ENCODE measurements at regions of chr20 and their contacts with region 1.

Region 1: DNA sequence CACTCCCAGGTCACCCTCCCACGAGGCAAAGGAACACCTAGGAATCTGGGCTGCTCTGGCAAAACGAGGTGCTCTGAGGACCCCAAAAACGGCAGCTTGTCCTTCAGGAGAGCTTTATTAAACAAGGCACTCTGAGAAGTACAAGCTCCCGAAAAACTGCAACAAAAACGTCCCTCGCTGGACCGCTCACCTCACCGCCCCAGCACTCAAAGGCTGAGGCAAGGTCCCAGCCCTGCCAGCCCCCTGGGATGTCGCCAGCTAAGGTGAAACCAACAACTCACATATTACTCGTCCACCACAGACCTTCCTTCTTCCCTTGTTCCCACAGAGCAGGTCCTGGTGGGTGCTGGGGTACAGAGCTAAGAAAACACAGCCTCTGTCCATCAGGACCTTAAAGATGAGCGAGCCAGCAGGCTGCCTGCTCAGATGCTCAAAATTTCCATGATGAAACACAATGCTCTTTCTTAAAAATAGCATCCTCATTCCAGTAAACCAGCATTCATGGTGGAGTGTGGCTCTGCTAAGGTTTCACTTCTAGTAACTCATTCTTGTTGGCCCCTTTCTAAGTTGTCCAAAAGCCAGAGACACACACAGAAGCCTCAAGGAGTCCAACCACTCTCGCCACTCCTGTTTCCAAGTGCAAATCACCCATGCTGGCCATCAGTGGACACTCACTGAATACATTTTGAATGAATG is 35.9 kb downstream of the ATP9A start:
- DNase-seq: no peak
- H3K4me3 Mint-ChIP-seq: peak overlapping the region; percentile 85
- H3K27ac Mint-ChIP-seq: peak overlapping the region; percentile 91
- H3K4me1 Mint-ChIP-seq: peaks cover 8% of the 10 kb centered on the region
- H3K27me3 Mint-ChIP-seq: no peaks in the 10 kb centered on the region

Region 2: DNA sequence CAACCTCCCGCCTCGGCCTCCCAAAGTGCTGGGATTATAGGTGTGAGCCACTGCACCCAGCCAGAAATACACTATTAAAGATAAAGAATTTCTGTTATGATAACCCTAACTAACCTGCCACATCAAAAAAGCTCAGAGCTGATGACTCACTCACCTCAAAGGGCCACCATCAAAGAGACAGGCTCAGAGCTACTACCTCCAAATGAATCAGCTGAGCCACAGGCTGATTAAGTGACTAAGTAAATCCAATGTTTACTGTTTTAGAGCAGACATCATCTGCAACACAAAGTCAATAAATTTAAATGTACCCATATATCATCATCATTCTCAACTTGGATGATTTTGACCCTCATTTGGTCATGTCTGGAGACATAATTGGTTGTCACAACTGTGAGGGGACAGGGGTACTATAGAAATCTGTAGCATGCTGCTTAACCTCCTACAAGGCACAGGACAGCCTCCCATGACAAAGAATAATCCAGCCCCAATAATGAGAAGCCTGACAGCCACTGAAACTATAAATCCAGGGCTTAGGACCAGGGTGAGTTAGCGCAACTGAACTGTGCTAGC is 70.5 kb before region 1 on chr20:
- intact Hi-C with region 1: loop called (anchors 5 kb)
- DNase-seq: peak; percentile 20
- H3K4me3 Mint-ChIP-seq: peak overlapping the region; percentile 5
- H3K27ac Mint-ChIP-seq: peak overlapping the region; percentile 58
- H3K4me1 Mint-ChIP-seq: peaks cover 24% of the 10 kb centered on the region
- H3K27me3 Mint-ChIP-seq: no peaks in the 10 kb centered on the region

Region 3: GRCh38 chr20:51720856-51721255 is 11.4 kb before region 1 on chr20:
- intact Hi-C with region 1: loop called (anchors 1 kb)
- DNase-seq: no peak
- H3K4me3 Mint-ChIP-seq: no peak overlapping the region
- H3K27ac Mint-ChIP-seq: peak overlapping the region; percentile 66
- H3K4me1 Mint-ChIP-seq: peaks cover 30% of the 10 kb centered on the region
- H3K27me3 Mint-ChIP-seq: no peaks in the 10 kb centered on the region

Region 4: GRCh38 chr20:51767010-51767558 is 34.8 kb after region 1 on chr20:
- intact Hi-C with region 1: loop called (anchors 5 kb)
- DNase-seq: peak; percentile 60
- H3K4me3 Mint-ChIP-seq: peak overlapping the region; percentile 69
- H3K27ac Mint-ChIP-seq: no peak overlapping the region
- H3K4me1 Mint-ChIP-seq: peaks cover 9% of the 10 kb centered on the region
- H3K27me3 Mint-ChIP-seq: peaks cover 27% of the 10 kb centered on the region

Region 5: DNA sequence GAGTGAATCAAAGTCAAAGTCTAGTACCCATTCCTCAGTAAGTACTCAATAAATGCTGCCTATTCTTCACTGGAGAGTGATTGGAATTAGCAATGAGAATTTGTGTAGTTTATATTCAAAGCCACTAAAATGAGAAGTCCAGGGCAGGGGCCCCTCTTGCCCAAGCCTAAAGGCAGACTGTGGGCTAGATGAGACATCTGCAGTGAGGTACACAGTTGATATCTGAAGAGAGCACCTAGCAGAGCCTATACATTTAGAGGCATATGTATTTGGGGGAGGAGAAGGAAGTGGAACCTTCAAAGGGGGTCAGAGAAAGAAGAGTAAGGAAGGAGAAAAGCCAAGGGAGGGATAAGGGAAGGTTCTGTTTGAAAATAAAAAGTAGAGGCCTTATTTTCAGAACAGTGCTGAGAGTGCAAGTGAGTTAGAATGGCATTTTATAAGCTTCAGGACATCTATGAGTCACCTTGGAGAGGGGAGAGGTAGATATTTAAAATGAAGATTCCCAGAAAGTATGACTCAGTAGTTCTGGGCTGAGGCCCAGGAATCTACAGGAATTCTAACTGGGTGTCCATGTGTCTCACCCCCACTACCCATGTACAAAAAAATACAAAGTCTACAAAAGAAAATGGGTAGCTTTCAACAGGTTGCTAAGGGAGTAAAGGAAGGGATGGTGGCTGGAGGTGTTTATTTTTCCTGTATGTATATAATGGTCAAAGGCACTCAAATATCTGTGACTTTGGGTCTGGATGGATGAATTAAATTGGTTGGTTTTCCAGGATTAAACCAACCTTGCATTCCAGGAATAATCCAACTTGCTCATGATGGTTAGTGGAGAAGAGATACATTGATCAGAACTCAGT is 324.2 kb after region 1 on chr20:
- intact Hi-C with region 1: no loop called
- DNase-seq: no peak
- H3K4me3 Mint-ChIP-seq: no peak overlapping the region
- H3K27ac Mint-ChIP-seq: no peak overlapping the region
- H3K4me1 Mint-ChIP-seq: no peaks in the 10 kb centered on the region
- H3K27me3 Mint-ChIP-seq: peaks cover 3% of the 10 kb centered on the region

Measured in activated T-helper 1 cell treated with anti-CD3 and anti-CD28 coated beads, Interleukin-12 subunit alpha, Interleukin-12 subunit beta, Interleukin-2, Interleukin-4 antibody, amounts not matched to agents 30 ng/mL and 10 ng/mL and 1 ng/mL, durations not matched to agents 14 hours and 24 hours and 36 hours (primary cell).